Uterus (tissue), 4 donors: ENCODE measurements at regions of chr16 and their contacts with region 1.

Region 1: DNA sequence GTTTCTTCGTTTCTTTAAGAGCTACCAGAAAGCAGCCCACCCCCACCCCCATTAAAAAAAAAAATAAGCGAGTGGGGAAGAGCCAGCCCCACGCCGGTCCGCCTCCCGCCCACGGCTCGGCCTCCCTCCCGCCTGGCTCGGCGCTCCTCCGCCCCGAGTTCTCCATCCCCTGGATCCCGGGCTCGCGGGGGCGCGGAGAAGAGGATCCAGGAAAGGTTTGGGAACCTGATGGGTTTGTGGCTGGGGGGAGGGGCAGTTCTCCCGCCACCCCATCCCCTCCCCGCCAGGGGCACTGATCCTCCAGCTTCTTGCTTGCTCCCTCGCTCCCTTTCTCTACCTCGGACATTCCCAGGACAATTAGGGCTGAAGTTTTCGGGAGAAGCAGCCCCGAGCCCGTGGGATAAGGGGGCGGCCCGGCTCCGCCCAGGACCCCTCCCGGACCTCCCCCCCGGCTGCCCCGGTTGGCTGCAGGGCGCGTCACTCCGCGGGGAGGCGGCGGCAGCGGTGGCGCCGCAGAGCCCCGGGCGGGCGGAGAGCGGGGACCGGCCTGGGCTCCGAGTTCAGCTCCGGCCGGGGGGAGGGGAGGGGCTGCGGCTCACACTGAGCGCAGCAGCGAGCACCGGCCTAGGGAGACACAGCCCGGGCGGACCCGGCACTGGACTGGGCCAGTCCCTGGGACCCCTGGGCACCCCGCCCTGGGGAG is 1.0 kb upstream of the SALL1 start:
- DNase-seq: peak; percentile 91 to 94
- H3K4me3 ChIP-seq: peak overlapping the region; percentile 66 to 69
- H3K27ac ChIP-seq: peak overlapping the region; percentile 97
- H3K4me1 ChIP-seq: no peaks in the 10 kb centered on the region
- H3K27me3 ChIP-seq: no peaks in the 10 kb centered on the region
- CTCF ChIP-seq: peak in 1 of 4 experiments; percentile 23
- POLR2A ChIP-seq: peak; percentile 55 to 94

Region 2: DNA sequence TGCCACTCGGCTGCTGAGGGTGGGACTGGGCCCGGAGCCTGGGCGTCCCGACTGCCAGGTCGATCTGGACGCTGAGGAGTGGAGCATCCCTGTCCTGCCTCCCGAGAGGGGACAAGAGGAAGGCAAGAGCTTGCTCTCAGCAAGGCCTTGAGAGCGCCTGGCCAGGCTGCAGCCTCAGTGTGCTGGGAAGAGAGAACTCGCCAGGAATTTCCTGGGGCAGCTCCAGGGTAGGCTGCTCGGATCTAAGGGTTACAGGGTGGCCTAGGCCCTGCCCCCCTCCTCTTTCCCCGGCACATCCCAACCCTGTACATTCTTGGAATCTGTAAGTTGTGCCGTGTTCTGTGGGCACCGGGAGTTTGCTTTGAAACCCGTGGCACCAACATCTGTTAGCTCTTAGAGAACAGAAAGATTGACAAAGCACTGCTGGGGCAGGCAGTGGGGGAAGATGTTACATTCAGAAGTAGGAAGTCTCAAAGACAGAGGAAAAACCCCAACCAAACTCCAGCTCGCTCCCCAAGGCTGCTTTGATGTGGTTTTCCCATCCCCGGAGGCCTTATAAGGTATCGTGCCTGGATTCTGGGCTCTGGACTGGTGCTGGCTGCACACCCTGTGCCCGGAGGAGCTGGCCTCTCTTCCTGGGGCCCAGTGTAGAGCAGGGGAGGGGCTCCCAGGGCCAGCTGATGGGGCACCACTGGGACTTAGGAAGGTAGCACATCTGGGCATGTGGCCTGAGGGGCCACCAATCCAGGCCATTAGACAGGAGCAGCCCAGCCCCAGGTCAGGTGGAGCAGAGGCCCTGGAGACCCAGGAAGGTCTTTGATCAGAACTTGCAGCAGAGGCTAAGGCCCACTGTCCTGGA is 548.7 kb before region 1 on chr16:
- intact Hi-C with region 1: loop called (anchors 10 kb)
- DNase-seq: peak; percentile 72 to 80
- H3K4me3 ChIP-seq: no peak overlapping the region
- H3K27ac ChIP-seq: peak overlapping the region; percentile 85 to 87
- H3K4me1 ChIP-seq: peaks cover 8 to 37% of the 10 kb centered on the region in 2 donors
- H3K27me3 ChIP-seq: no peaks in the 10 kb centered on the region
- CTCF ChIP-seq: no peak
- POLR2A ChIP-seq: no peak

Region 3: GRCh38 chr16:51210087-51210486 is 58.0 kb after region 1 on chr16:
- intact Hi-C with region 1: no loop called
- DNase-seq: no peak
- H3K4me3 ChIP-seq: no peak overlapping the region
- H3K27ac ChIP-seq: no peak overlapping the region
- H3K4me1 ChIP-seq: no peaks in the 10 kb centered on the region
- H3K27me3 ChIP-seq: no peaks in the 10 kb centered on the region
- CTCF ChIP-seq: no peak
- POLR2A ChIP-seq: no peak

Region 4: DNA sequence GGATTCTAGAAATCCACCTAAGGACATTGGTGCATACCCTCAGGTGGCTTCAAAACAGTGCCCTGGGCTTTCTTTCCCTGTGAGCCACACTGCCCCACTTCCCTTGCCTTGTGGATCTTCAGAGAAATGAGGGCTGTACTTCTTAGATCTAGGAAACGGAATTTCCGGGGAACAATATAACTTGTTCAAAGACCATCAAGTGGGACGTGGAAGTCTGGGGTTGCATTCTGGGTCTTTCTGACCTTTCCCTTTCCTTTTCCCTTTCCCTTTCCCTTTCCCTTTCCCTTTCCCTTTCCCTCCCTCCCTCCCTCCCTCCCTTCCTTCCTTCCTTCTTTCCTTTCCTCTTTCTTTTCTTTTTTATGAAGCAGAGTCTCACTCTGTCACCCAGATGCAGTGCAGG is 96.1 kb after region 1 on chr16:
- intact Hi-C with region 1: no loop called
- DNase-seq: no peak
- H3K4me3 ChIP-seq: no peak overlapping the region
- H3K27ac ChIP-seq: no peak overlapping the region
- H3K4me1 ChIP-seq: peaks cover 0 to 4% of the 10 kb centered on the region in 2 donors
- H3K27me3 ChIP-seq: no peaks in the 10 kb centered on the region
- CTCF ChIP-seq: no peak
- POLR2A ChIP-seq: no peak

Region 5: GRCh38 chr16:51262428-51262827 is 110.3 kb after region 1 on chr16:
- intact Hi-C with region 1: no loop called
- DNase-seq: no peak
- H3K4me3 ChIP-seq: no peak overlapping the region
- H3K27ac ChIP-seq: no peak overlapping the region
- H3K4me1 ChIP-seq: no peaks in the 10 kb centered on the region
- H3K27me3 ChIP-seq: no peaks in the 10 kb centered on the region
- CTCF ChIP-seq: no peak
- POLR2A ChIP-seq: no peak